CD4-positive, alpha-beta memory T cell (primary cell): ENCODE measurements at regions of chr2 and their contacts with region 1.

Region 1: GRCh38 chr2:25794544-25795276 is 83.6 kb downstream of the ASXL2 start:
- DNase-seq: peak; percentile 54 to 66 (median 55)
- H3K4me3 ChIP-seq: peak overlapping the region in 1 of 2 donors; percentile 48
- H3K4me3 Mint-ChIP-seq: peak overlapping the region; percentile 81 to 94 (median 90)
- H3K27ac ChIP-seq: peak overlapping the region; percentile 68
- H3K27ac Mint-ChIP-seq: peak overlapping the region; percentile 92 to 98 (median 94)
- H3K4me1 ChIP-seq: peaks cover 95% of the 10 kb centered on the region
- H3K4me1 Mint-ChIP-seq: peaks cover 63 to 91% (median 76%) of the 10 kb centered on the region in 4 donors
- H3K27me3 ChIP-seq: no peaks in the 10 kb centered on the region
- H3K27me3 Mint-ChIP-seq: no peaks in the 10 kb centered on the region

Region 2: GRCh38 chr2:25809646-25810045 is 14.9 kb after region 1 on chr2:
- CTCF ChIA-PET with region 1: no interaction called
- POLR2A ChIA-PET with region 1: interaction called, 12 read pairs
- intact Hi-C with region 1: no loop called
- DNase-seq: no peak
- H3K4me3 ChIP-seq: no peak overlapping the region
- H3K4me3 Mint-ChIP-seq: peak overlapping the region in 1 of 8 donors; percentile 4
- H3K27ac ChIP-seq: no peak overlapping the region
- H3K27ac Mint-ChIP-seq: peak overlapping the region in 5 of 7 donors; percentile 16 to 82 (median 57)
- H3K4me1 ChIP-seq: peaks cover 26% of the 10 kb centered on the region
- H3K4me1 Mint-ChIP-seq: peaks cover 28 to 54% (median 41%) of the 10 kb centered on the region in 4 donors
- H3K27me3 ChIP-seq: no peaks in the 10 kb centered on the region
- H3K27me3 Mint-ChIP-seq: no peaks in the 10 kb centered on the region

Region 3: DNA sequence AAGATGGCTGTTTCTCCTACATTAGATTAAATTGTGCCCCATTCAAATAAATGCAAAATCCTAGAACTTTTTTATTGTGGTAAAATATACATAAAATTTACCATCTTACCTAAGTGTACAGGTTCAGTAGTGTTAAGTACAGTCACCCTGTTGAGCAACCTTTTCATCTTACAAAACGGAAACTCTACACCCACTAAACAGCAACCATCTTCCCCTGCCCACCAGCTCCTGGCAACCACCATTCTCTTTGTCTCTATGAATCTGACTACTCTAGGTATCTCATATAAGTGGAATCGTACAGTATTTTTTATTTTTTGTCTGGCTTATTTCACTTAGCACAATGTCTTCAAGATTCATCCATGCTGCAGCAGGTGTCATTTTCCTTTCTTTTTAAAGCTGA is 30.5 kb after region 1 on chr2:
- CTCF ChIA-PET with region 1: interaction called, 4 read pairs
- POLR2A ChIA-PET with region 1: interaction called, 9 read pairs
- intact Hi-C with region 1: loop called (anchors 5 kb)
- DNase-seq: peak; percentile 42 to 64 (median 52)
- H3K4me3 ChIP-seq: no peak overlapping the region
- H3K4me3 Mint-ChIP-seq: peak overlapping the region; percentile 17 to 76 (median 68)
- H3K27ac ChIP-seq: no peak overlapping the region
- H3K27ac Mint-ChIP-seq: peak overlapping the region; percentile 33 to 84 (median 71)
- H3K4me1 ChIP-seq: peaks cover 55% of the 10 kb centered on the region
- H3K4me1 Mint-ChIP-seq: peaks cover 47 to 75% (median 58%) of the 10 kb centered on the region in 4 donors
- H3K27me3 ChIP-seq: no peaks in the 10 kb centered on the region
- H3K27me3 Mint-ChIP-seq: no peaks in the 10 kb centered on the region